Left ventricle myocardium inferior (tissue), 1 donor: ENCODE measurements at regions of chr14 and their contacts with region 1.

Region 1: GRCh38 chr14:25132732-25133422 is 82.9 kb upstream of the STXBP6 start:
- DNase-seq: peak; percentile 51
- H3K4me3 ChIP-seq: peak overlapping the region; percentile 45
- H3K27ac ChIP-seq: no peak overlapping the region
- H3K4me1 ChIP-seq: peaks cover 9% of the 10 kb centered on the region
- H3K27me3 ChIP-seq: peaks cover 17% of the 10 kb centered on the region
- CTCF ChIP-seq: peak; percentile 93

Region 2: DNA sequence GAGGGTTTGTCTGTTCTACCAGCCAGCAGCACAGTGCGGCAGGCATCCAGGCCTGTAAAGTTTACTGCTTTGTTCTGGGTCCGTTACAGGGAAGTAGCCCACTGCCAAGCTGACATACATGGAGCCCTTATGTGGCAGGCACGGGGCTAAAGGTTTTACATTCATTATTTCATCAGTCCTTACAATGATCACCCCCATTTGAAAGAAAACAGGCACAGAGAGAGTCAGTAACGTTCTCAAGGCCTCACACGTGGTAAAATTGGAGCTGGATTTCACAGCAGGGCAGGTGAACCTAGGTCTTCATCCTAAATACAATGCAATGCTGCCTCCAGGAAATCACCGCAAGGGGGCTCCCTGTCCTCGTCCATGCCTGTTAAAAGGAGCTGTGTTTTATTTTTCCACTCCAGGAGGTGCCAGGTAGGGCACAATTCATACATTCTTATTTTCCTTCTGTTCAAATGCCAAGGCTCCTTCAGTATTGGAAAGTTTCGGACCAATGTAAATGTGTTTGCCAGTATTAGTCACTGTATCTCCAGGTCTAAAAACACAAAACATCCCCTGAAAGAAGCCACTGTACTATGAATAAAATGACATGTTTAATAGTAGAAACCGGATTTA is 326.7 kb before region 1 on chr14:
- intact Hi-C with region 1: loop called (anchors 10 kb)
- DNase-seq: peak; percentile 68
- H3K4me3 ChIP-seq: no peak overlapping the region
- H3K27ac ChIP-seq: peak overlapping the region; percentile 32
- H3K4me1 ChIP-seq: peaks cover 47% of the 10 kb centered on the region
- H3K27me3 ChIP-seq: no peaks in the 10 kb centered on the region
- CTCF ChIP-seq: peak; percentile 93

Region 3: GRCh38 chr14:25049568-25050268 is 83.2 kb before region 1 on chr14 and contains the start of gene STXBP6:
- intact Hi-C with region 1: loop called (anchors 10 kb)
- DNase-seq: peak; percentile 84
- H3K4me3 ChIP-seq: peak within 1 kb of the TSS; percentile 83
- H3K27ac ChIP-seq: peak within 1 kb of the TSS; percentile 96
- H3K4me1 ChIP-seq: peaks cover 64% of the 10 kb centered on the region
- H3K27me3 ChIP-seq: no peaks in the 10 kb centered on the region
- CTCF ChIP-seq: peak; percentile 22
- total RNA-seq, gene STXBP6: 21.7 TPM